Vagina (tissue), 2 donors: ENCODE measurements at regions of chr5 and their contacts with region 1.

Region 1: DNA sequence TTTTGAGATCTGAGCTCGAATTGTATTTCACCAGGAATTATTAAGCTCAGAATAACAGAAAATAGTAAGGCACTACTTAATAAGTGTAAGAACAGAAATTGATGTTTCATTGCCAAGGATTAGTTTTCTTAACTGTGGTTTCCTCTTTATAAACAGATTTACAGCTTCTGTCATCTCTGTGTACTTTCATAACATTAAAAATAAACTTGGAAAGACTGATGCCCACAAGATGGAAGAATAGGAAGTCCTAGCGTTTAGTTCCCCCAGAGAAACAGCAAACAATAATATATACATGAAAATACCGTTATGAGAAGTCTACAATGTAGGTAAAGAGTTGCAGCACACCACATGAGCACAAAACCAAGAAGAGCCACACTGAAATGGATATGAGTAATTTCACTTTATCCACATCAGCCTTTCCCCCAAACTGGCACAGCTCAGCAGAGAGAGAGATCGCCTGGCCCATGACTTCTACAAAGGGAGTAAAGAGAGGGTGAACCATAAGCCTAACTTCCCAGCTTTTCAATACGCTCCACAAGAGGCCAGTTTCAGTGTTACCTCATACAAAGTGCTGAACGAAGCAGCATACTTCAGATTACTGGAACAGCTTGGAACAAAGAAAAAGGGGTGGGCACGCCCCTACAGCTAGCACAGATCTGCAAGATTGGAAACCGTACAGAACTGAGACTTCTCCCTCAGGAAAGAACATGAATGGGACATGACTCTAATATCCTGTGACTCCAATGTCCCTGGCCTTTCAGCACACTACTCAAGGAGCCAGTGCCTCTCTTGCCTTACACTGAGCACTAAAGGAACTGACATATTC is 75.4 kb downstream of the EMB start:
- DNase-seq: no peak
- H3K4me3 ChIP-seq: no peak overlapping the region
- H3K27ac ChIP-seq: no peak overlapping the region
- H3K4me1 ChIP-seq: no peaks in the 10 kb centered on the region
- H3K27me3 ChIP-seq: no peaks in the 10 kb centered on the region
- CTCF ChIP-seq: no peak
- POLR2A ChIP-seq: no peak

Region 2: GRCh38 chr5:50990296-50990924 is 624.8 kb after region 1 on chr5:
- intact Hi-C with region 1: loop called (anchors 5 kb)
- DNase-seq: no peak
- H3K4me3 ChIP-seq: no peak overlapping the region
- H3K27ac ChIP-seq: no peak overlapping the region
- H3K4me1 ChIP-seq: no peaks in the 10 kb centered on the region
- H3K27me3 ChIP-seq: no peaks in the 10 kb centered on the region
- CTCF ChIP-seq: no peak
- POLR2A ChIP-seq: no peak